Activated B cell treated with CpG ODN at 0.5 μM for 24 hours (primary cell): ENCODE measurements at regions of chr21 and their contacts with region 1.

Region 1: GRCh38 chr21:41194918-41195695 is 27.1 kb downstream of the BACE2 start:
- DNase-seq: no peak
- ATAC-seq: peak; percentile 94
- H3K4me3 Mint-ChIP-seq: peak overlapping the region; percentile 60
- H3K27ac Mint-ChIP-seq: peak overlapping the region; percentile 89
- H3K4me1 Mint-ChIP-seq: peaks cover 78% of the 10 kb centered on the region
- H3K27me3 Mint-ChIP-seq: no peaks in the 10 kb centered on the region
- CTCF ChIP-seq: no peak

Region 2: GRCh38 chr21:41210401-41211059 is 15.4 kb after region 1 on chr21:
- CTCF ChIA-PET with region 1: no interaction called
- POLR2A ChIA-PET with region 1: no interaction called
- intact Hi-C with region 1: no loop called
- DNase-seq: no peak
- ATAC-seq: no peak
- H3K4me3 Mint-ChIP-seq: no peak overlapping the region
- H3K27ac Mint-ChIP-seq: no peak overlapping the region
- H3K4me1 Mint-ChIP-seq: peaks cover 19% of the 10 kb centered on the region
- H3K27me3 Mint-ChIP-seq: no peaks in the 10 kb centered on the region
- CTCF ChIP-seq: no peak

Region 3: GRCh38 chr21:41229509-41230248 is 34.6 kb after region 1 on chr21:
- CTCF ChIA-PET with region 1: no interaction called
- POLR2A ChIA-PET with region 1: no interaction called
- intact Hi-C with region 1: loop called (anchors 2 kb)
- DNase-seq: no peak
- ATAC-seq: peak; percentile 82
- H3K4me3 Mint-ChIP-seq: peak overlapping the region; percentile 78
- H3K27ac Mint-ChIP-seq: peak overlapping the region; percentile 91
- H3K4me1 Mint-ChIP-seq: peaks cover 82% of the 10 kb centered on the region
- H3K27me3 Mint-ChIP-seq: no peaks in the 10 kb centered on the region
- CTCF ChIP-seq: no peak